ENCODE measurements at regions of chr9 and their contacts with region 1.

Region 1: GRCh38 chr9:85617141-85617670 is 124.5 kb downstream of the AGTPBP1 start:
- DNase-seq: no peak
- ATAC-seq: no peak

Region 2: DNA sequence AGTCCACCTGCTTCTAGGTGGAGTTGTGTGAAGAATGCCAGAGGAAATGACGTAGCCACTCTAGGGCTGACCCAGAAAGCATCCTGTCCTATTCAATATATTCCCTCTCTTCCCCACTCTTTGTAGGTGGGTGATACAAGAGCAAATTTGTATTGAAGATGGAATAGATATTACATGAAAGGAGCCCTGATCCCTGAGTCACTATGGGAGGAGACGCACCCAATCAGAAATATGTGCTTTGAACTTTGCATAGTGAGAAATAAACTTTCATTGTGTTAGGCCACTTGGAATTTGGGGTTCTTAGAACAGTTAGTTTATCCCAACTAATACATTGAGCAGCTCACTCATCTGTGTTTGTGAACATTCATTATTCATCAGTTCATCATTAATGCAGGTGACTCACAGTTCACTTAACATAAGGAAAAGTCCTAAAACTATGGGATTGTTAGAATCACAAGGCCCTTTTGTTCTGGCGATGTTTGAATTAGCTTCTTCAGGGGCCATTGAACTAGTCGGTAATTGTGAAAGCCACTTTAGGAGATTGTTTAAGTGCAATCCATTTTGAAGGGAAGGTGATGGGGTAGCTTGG is 974.6 kb before region 1 on chr9:
- intact Hi-C with region 1: no loop called
- DNase-seq: no peak
- ATAC-seq: no peak

Region 3: DNA sequence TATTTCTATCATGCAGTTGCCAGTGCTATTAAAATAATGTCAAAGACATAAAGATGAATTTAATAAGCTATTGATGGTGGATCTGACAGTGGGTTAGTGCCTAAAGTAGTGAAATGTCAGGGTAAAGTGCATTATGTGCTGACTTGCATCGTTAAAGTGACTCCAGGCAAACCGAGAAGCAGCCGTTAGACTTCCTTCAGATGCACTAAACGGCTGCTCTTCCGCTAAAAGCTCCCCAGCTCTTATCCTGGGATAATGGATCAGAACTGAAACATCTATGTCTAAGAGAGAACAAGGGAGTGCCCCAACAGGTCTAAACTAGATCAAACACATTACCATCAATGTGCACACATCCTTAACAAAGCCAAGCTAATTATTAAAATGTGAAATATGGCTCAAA is 479.5 kb before region 1 on chr9:
- intact Hi-C with region 1: no loop called
- DNase-seq: no peak
- ATAC-seq: no peak

Region 4: GRCh38 chr9:85603936-85604335 is 13.3 kb before region 1 on chr9:
- intact Hi-C with region 1: loop called (anchors 2 kb)
- DNase-seq: no peak
- ATAC-seq: no peak